ENCODE measurements at regions of chr20 and their contacts with region 1.

Region 1: GRCh38 chr20:50750145-50750671 is 18.8 kb downstream of the PARD6B start:
- DNase-seq: no peak
- H3K4me3 Mint-ChIP-seq: no peak overlapping the region
- H3K27ac Mint-ChIP-seq: no peak overlapping the region
- H3K4me1 Mint-ChIP-seq: peaks cover 26% of the 10 kb centered on the region
- H3K27me3 Mint-ChIP-seq: no peaks in the 10 kb centered on the region

Region 2: GRCh38 chr20:50625986-50626677 is 124.1 kb before region 1 on chr20:
- CTCF ChIA-PET with region 1: interaction called, 29 read pairs
- POLR2A ChIA-PET with region 1: no interaction called
- intact Hi-C with region 1: loop called (anchors 10 kb)
- DNase-seq: peak; percentile 51
- H3K4me3 Mint-ChIP-seq: no peak overlapping the region
- H3K27ac Mint-ChIP-seq: no peak overlapping the region
- H3K4me1 Mint-ChIP-seq: no peaks in the 10 kb centered on the region
- H3K27me3 Mint-ChIP-seq: peaks cover 1% of the 10 kb centered on the region

Region 3: GRCh38 chr20:50663095-50663850 is 86.9 kb before region 1 on chr20:
- CTCF ChIA-PET with region 1: interaction called, 33 read pairs
- POLR2A ChIA-PET with region 1: no interaction called
- intact Hi-C with region 1: loop called (anchors 2 kb)
- DNase-seq: peak; percentile 27
- H3K4me3 Mint-ChIP-seq: no peak overlapping the region
- H3K27ac Mint-ChIP-seq: no peak overlapping the region
- H3K4me1 Mint-ChIP-seq: no peaks in the 10 kb centered on the region
- H3K27me3 Mint-ChIP-seq: peaks cover 2% of the 10 kb centered on the region

Region 4: DNA sequence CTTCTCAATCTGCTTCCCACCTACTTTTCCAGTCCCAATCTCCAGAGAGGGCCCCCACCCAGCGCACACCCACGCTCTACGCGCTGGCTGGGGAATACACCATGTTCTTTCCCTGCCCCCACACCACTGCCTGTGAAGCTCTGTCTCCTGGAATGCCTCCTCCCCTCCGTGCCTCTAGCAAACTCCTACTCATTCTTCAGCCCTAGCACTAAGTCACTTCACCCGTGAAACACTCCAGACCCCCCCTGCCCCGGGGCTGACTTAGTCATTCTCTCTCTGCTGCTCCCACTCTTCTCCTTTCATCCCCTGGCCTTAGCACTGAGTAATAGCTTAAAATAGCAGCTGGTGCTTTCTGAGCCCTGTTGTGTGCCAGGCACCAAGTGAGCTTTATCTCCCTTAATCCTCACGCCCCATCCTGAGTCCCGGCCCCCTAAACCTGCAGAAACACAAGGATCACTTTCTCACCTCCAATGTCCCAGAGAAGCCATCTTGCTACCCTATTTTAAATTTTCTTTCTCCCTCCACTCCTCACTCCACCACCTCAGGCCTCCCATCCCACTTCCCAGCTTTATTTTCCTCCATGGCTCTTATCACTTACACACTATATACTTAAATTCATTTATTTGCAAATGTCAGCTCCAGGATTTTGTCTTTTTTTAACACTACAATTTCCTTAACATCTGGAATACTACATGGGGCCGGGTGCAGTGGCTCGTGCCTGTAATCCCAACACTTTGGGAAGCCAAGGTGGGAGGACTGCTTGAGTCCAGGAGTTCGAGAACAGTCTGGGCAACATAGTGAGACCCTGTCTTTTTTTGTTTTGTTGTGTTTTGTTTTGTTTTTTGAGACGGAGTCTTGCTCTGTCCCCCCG is 25.1 kb before region 1 on chr20:
- CTCF ChIA-PET with region 1: interaction called, 23 read pairs
- POLR2A ChIA-PET with region 1: interaction called, 4 read pairs
- intact Hi-C with region 1: loop called (anchors 1 kb)
- DNase-seq: peak; percentile 91
- H3K4me3 Mint-ChIP-seq: no peak overlapping the region
- H3K27ac Mint-ChIP-seq: no peak overlapping the region
- H3K4me1 Mint-ChIP-seq: peaks cover 28% of the 10 kb centered on the region
- H3K27me3 Mint-ChIP-seq: no peaks in the 10 kb centered on the region

Region 5: GRCh38 chr20:50737352-50737751 is 12.9 kb before region 1 on chr20:
- CTCF ChIA-PET with region 1: interaction called, 21 read pairs
- POLR2A ChIA-PET with region 1: no interaction called
- intact Hi-C with region 1: no loop called
- DNase-seq: no peak
- H3K4me3 Mint-ChIP-seq: no peak overlapping the region
- H3K27ac Mint-ChIP-seq: no peak overlapping the region
- H3K4me1 Mint-ChIP-seq: peaks cover 29% of the 10 kb centered on the region
- H3K27me3 Mint-ChIP-seq: no peaks in the 10 kb centered on the region

Region 6: DNA sequence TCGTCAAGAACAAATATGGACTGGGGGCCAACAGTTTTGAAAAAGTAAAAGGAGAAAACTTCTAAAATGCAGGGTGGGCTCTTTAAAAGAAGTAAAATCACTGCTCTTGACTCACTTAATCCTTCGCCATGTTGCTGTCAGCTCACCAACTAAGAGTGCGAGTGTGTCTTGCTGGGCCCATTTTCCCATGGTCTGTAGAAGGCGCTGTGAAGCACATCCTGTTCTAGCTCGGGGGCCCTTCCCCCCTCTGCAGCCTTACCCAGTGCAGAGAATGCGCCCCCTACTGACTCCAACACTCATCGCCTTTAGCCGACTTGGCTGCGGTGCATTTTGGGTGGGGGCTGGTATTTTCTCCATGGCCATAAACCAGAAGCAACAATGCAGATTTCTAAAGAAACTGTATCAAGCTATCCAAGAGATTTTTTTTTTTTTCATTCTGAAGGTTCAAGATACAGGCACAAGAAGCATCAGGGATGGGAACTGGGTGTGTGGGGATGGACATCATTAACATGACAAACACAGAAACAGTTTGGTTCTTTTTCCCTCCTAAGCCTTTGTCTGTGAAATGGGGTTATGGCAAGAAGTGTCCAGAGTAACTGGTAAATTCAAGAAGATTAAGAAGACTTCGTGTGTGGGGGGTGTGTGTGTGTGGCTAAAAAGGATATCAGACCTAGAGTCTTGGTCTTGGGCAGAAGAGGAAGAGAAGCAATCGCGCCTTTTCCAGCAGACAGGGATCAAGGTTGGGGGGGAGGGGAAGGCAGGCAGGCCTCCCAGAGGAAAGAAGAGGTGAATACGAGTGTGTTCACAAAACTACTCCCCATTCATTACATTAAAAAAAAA is 179.3 kb after region 1 on chr20:
- CTCF ChIA-PET with region 1: interaction called, 10 read pairs
- POLR2A ChIA-PET with region 1: no interaction called
- intact Hi-C with region 1: no loop called
- DNase-seq: peak; percentile 97
- H3K4me3 Mint-ChIP-seq: peak overlapping the region; percentile 98
- H3K27ac Mint-ChIP-seq: peak overlapping the region; percentile 97
- H3K4me1 Mint-ChIP-seq: peaks cover 48% of the 10 kb centered on the region
- H3K27me3 Mint-ChIP-seq: no peaks in the 10 kb centered on the region

Region 7: DNA sequence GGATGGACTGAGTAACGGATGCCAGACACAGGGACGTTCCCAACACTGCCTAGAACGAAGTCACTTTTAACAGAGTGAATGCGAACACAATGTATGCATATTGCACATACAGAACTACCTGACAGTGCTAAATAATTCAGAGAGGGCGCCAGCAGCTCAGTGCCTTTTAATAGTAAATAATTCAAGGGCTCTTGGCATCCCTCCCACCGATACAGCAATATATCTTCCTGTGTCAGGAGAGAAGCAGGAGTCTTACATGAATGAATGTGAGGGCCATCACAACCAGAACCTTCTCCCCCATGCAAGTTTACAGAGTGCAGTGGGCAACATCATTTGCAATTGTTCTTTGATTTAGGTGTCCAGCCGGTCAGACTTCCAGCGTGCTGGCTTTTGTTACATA is 361.1 kb after region 1 on chr20:
- CTCF ChIA-PET with region 1: no interaction called
- POLR2A ChIA-PET with region 1: no interaction called
- intact Hi-C with region 1: no loop called
- DNase-seq: no peak
- H3K4me3 Mint-ChIP-seq: no peak overlapping the region
- H3K27ac Mint-ChIP-seq: no peak overlapping the region
- H3K4me1 Mint-ChIP-seq: no peaks in the 10 kb centered on the region
- H3K27me3 Mint-ChIP-seq: peaks cover 17% of the 10 kb centered on the region

Measured in activated CD4-positive, alpha-beta memory T cell treated with anti-CD3 and anti-CD28 coated beads for 36 hours (primary cell).